ENCODE measurements at regions of chr2 and their contacts with region 1.

Region 1: GRCh38 chr2:200212862-200213425 is 93.5 kb upstream of the SPATS2L start:
- DNase-seq: no peak
- ATAC-seq: no peak
- H3K4me3 ChIP-seq: no peak overlapping the region
- H3K4me3 Mint-ChIP-seq: no peak overlapping the region
- H3K27ac ChIP-seq: no peak overlapping the region
- H3K27ac Mint-ChIP-seq: no peak overlapping the region
- H3K4me1 ChIP-seq: no peaks in the 10 kb centered on the region
- H3K4me1 Mint-ChIP-seq: no peaks in the 10 kb centered on the region
- H3K27me3 ChIP-seq: peaks cover 0 to 2% of the 10 kb centered on the region in 2 experiments
- H3K27me3 Mint-ChIP-seq: peaks cover 11 to 13% of the 10 kb centered on the region in 2 donors

Region 2: GRCh38 chr2:199830531-199830930 is 382.4 kb before region 1 on chr2:
- CTCF ChIA-PET with region 1: no interaction called
- POLR2A ChIA-PET with region 1: interaction called in 1 of 2 experiments, 13 read pairs
- DNase-seq: no peak
- ATAC-seq: no peak
- H3K4me3 ChIP-seq: no peak overlapping the region
- H3K4me3 Mint-ChIP-seq: no peak overlapping the region
- H3K27ac ChIP-seq: no peak overlapping the region
- H3K27ac Mint-ChIP-seq: no peak overlapping the region
- H3K4me1 ChIP-seq: no peaks in the 10 kb centered on the region
- H3K4me1 Mint-ChIP-seq: no peaks in the 10 kb centered on the region
- H3K27me3 ChIP-seq: no peaks in the 10 kb centered on the region
- H3K27me3 Mint-ChIP-seq: no peaks in the 10 kb centered on the region

Region 3: DNA sequence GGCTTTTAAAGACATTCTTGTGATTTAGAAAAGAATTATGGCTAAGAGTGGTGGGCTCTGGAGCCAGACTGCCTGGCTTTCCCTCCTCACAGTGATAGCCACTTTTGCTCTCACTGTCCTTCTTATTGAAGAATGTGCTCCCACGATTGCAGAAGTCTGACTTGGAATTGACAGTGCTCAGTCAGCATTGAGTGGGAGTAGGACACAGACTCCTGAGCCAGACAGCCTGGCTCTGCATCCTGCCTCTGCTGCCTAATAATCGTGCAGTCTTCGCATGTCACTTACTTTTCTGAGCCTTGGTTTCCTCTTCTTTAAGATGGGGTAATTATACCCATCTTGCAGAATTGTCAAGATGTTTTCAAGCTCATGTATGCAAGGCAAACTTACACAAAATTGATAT is 116.9 kb after region 1 on chr2:
- CTCF ChIA-PET with region 1: no interaction called
- POLR2A ChIA-PET with region 1: no interaction called
- DNase-seq: no peak
- ATAC-seq: no peak
- H3K4me3 ChIP-seq: no peak overlapping the region
- H3K4me3 Mint-ChIP-seq: no peak overlapping the region
- H3K27ac ChIP-seq: no peak overlapping the region
- H3K27ac Mint-ChIP-seq: no peak overlapping the region
- H3K4me1 ChIP-seq: no peaks in the 10 kb centered on the region
- H3K4me1 Mint-ChIP-seq: no peaks in the 10 kb centered on the region
- H3K27me3 ChIP-seq: no peaks in the 10 kb centered on the region
- H3K27me3 Mint-ChIP-seq: no peaks in the 10 kb centered on the region

Region 4: GRCh38 chr2:200454927-200455801 is 242.2 kb after region 1 on chr2:
- CTCF ChIA-PET with region 1: no interaction called
- POLR2A ChIA-PET with region 1: no interaction called
- DNase-seq: no peak
- ATAC-seq: no peak
- H3K4me3 ChIP-seq: no peak overlapping the region
- H3K4me3 Mint-ChIP-seq: no peak overlapping the region
- H3K27ac ChIP-seq: no peak overlapping the region
- H3K27ac Mint-ChIP-seq: no peak overlapping the region
- H3K4me1 ChIP-seq: peaks cover 0 to 10% of the 10 kb centered on the region in 2 experiments
- H3K4me1 Mint-ChIP-seq: peaks cover 15 to 28% (median 21%) of the 10 kb centered on the region in 3 donors
- H3K27me3 ChIP-seq: no peaks in the 10 kb centered on the region
- H3K27me3 Mint-ChIP-seq: no peaks in the 10 kb centered on the region